HCT116 (cell line): ENCODE measurements at regions of chr7 and their contacts with region 1.

Region 1: DNA sequence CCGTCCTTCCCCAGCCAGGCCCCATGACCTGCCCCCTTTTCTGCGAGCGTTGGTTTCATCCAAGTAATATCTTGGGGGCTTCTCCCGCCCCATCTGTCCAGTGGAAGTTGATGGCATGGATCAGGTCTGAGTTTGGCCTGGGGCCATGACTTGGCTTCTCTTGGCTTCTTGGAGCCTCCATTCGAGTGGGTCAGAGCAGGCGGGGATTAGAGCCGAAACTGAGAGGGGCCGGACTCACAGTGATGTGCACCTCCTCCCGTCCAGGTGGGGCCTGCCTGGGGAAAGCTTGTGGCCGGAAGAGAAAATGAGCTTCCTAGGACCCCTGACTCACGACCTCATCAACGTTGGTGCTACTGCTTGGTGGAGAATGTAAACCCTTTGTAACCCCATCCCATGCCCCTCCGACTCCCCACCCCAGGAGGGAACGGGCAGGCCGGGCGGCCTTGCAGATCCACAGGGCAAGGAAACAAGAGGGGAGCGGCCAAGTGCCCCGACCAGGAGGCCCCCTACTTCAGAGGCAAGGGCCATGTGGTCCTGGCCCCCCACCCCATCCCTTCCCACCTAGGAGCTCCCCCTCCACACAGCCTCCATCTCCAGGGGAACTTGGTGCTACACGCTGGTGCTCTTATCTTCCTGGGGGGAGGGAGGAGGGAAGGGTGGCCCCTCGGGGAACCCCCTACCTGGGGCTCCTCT is 15.1 kb upstream of the LIMK1 start:
- DNase-seq: no peak
- ATAC-seq: no peak
- H3K4me3 ChIP-seq: no peak overlapping the region
- H3K27ac ChIP-seq: no peak overlapping the region
- H3K4me1 ChIP-seq: peaks cover 5 to 17% of the 10 kb centered on the region in 2 experiments
- H3K27me3 ChIP-seq: no peaks in the 10 kb centered on the region
- CTCF ChIP-seq: no peak
- POLR2A ChIP-seq: no peak
- RAD21 ChIP-seq: no peak

Region 2: GRCh38 chr7:74183613-74184450 is 115.3 kb after region 1 on chr7:
- CTCF ChIA-PET with region 1: interaction called, 12 read pairs
- POLR2A ChIA-PET with region 1: interaction called, 6 read pairs
- RAD21 ChIA-PET with region 1: interaction called in 1 of 2 experiments, 3 read pairs
- intact Hi-C with region 1: loop called (anchors 2 kb)
- DNase-seq: no peak
- ATAC-seq: peak; percentile 76
- H3K4me3 ChIP-seq: no peak overlapping the region
- H3K27ac ChIP-seq: peak overlapping the region; percentile 9; the same call in 1 of the 2 replicates
- H3K4me1 ChIP-seq: peaks cover 46 to 76% of the 10 kb centered on the region in 2 experiments
- H3K27me3 ChIP-seq: no peaks in the 10 kb centered on the region
- CTCF ChIP-seq: peak; percentile 58 to 72 (median 71)
- POLR2A ChIP-seq: no peak
- RAD21 ChIP-seq: peak; percentile 70

Region 3: DNA sequence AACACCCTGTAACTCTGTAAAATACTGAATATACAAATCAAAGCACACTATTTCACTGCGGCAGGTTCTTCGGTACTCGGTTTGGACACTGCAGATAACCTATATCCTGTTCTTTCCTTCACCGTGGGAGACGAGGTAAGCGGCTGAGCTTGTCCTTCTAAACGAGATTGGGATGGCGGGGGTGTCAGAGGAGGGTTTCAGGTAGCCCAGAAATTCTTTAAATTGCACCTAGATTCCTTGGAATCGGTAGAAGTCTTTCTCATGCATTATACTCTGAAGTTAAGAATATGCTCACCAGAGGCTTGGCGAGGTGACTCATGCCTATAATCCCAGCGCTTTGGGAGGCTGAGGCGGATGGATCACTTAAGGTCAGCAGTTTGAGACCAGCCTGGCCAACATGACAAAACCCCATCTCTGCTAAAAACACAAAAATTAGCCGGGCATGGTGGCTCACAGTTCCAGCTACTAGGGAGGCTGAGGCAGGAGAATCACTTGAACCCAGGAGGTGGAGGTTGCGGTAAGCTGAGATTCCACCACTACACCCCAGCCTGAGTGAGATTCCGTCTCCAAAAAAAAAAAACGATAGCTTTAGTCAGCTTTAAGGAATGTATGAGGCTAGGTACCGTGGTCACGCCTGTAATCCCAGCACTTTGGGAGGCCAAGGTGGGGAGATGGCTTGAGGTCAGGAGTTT is 131.2 kb after region 1 on chr7:
- CTCF ChIA-PET with region 1: interaction called, 6 read pairs
- POLR2A ChIA-PET with region 1: interaction called, 4 read pairs
- RAD21 ChIA-PET with region 1: interaction called in 1 of 2 experiments, 3 read pairs
- intact Hi-C with region 1: loop called (anchors 1 kb)
- DNase-seq: peak; percentile 78
- ATAC-seq: peak; percentile 80
- H3K4me3 ChIP-seq: peak overlapping the region in 1 of 2 experiments; percentile 38; a peak in 2 of 4 replicates
- H3K27ac ChIP-seq: peak overlapping the region; percentile 95
- H3K4me1 ChIP-seq: peaks cover 43 to 53% of the 10 kb centered on the region in 2 experiments
- H3K27me3 ChIP-seq: no peaks in the 10 kb centered on the region
- CTCF ChIP-seq: no peak
- POLR2A ChIP-seq: no peak
- RAD21 ChIP-seq: no peak

Region 4: DNA sequence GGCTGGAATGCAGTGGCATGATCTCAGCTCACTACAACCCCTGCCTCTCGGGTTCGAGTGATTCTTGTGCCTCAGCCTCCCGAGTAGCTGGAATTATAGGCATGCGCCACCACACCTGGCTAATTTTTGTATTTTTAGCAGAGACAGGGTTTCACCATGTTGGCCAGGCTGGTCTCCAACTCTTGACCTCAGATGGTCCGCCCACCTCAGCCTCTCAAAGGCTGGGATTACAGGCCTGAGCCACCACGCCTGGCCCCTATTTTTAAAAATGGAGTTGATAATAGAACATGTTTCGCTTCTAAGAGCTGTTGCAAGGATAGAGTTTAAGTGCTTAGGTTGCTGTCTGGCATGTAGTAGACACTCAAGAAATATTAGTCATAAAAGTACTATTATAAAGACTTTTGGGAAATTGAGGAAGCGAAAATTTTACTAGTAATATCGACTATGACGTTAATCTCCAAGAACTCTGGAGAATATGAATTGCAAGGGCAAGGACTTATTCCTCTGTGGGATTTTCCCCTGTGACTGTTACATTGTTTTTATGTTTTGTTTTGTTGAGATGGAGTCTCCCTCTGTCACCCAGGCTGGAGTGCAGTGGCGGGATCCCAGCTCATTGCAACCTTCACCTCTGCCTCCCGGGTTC is 596.9 kb after region 1 on chr7:
- CTCF ChIA-PET with region 1: no interaction called
- POLR2A ChIA-PET with region 1: no interaction called
- RAD21 ChIA-PET with region 1: interaction called in 1 of 2 experiments, 10 read pairs
- intact Hi-C with region 1: no loop called
- DNase-seq: no peak
- ATAC-seq: no peak
- H3K4me3 ChIP-seq: no peak overlapping the region
- H3K27ac ChIP-seq: no peak overlapping the region
- H3K4me1 ChIP-seq: peaks cover 5 to 8% of the 10 kb centered on the region in 2 experiments; a peak in 3 of 4 replicates
- H3K27me3 ChIP-seq: no peaks in the 10 kb centered on the region
- CTCF ChIP-seq: no peak
- POLR2A ChIP-seq: no peak
- RAD21 ChIP-seq: no peak